ENCODE measurements at regions of chr3 and their contacts with region 1.

Region 1: DNA sequence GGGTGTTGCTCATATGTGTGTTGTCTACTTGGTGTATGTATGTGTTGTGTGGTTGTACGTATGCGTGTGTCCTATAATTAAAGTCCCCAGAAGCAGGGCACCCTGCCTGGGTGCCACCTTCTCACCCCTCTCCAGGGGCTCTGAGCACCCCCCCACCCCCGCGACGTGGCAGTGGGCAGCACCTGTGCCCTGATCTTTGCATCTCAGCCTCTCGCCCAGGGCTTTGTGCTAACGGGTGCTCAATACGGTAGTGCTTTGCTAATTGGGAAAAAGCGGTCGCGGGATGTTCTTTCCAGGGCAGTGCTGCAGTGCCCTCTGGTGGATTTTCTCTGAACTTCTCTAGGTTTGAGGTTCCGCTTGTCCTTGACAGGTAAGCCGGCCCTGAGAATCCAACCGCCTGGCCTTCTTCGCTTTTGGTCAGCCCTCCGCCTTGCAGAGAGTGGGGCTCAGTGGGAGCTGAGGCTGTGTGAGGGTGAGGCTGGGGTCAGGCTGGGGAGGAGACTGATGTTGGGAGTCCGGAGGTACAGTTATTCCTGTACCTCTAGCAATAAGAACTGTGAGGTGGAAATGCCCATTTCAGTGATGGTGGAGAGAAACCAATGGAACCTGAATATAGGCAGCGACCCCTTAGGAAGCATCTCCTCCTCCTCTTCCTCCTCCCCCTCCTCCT is 17.6 kb upstream of the EPHB3 start:
- DNase-seq: peak; percentile 85
- ATAC-seq: peak; percentile 80
- H3K4me3 Mint-ChIP-seq: no peak overlapping the region
- H3K27ac Mint-ChIP-seq: no peak overlapping the region
- H3K4me1 Mint-ChIP-seq: peaks cover 5% of the 10 kb centered on the region
- H3K27me3 Mint-ChIP-seq: peaks cover 24% of the 10 kb centered on the region

Region 2: DNA sequence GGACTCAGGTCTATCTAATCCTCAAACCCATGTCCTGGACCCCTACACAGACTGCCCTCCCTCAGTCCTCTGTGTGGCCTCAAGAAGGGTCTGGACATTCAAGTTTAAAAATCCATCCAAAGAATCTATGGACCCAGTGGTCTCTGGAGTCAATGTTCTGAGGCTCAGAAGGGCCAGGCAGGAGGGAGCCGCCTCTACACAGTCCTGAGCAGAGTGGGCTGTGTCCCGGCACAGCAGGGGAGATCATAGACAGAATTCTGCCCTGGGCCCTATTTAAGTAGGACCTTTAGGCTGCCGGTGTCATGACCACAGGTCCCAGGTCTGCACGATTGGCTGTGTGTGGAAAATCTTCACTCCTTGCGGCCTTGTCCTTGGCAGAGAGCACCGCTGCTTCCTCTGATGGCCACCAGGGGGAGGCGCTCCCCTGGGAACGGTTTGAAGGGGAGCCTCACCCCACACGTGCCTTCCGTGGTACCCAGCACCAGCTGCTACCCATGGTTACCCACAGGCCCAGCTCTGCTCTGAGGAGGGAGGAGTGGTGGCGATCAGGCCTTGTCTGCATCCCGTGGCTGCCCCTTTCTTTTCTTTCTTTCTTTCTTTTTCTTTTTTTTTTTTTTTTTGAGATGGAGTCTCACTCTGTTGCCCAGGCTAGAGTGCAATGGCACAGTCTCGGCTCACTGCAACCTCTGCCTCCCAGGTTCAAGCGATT is 126.2 kb before region 1 on chr3:
- CTCF ChIA-PET with region 1: interaction called, 17 read pairs
- POLR2A ChIA-PET with region 1: no interaction called
- DNase-seq: peak; percentile 75
- ATAC-seq: peak; percentile 97
- H3K4me3 Mint-ChIP-seq: no peak overlapping the region
- H3K27ac Mint-ChIP-seq: no peak overlapping the region
- H3K4me1 Mint-ChIP-seq: no peaks in the 10 kb centered on the region
- H3K27me3 Mint-ChIP-seq: peaks cover 1% of the 10 kb centered on the region

Region 3: GRCh38 chr3:184469423-184469822 is 74.6 kb before region 1 on chr3:
- CTCF ChIA-PET with region 1: interaction called, 10 read pairs
- POLR2A ChIA-PET with region 1: no interaction called
- DNase-seq: peak; percentile 33
- ATAC-seq: peak; percentile 48
- H3K4me3 Mint-ChIP-seq: no peak overlapping the region
- H3K27ac Mint-ChIP-seq: no peak overlapping the region
- H3K4me1 Mint-ChIP-seq: peaks cover 9% of the 10 kb centered on the region
- H3K27me3 Mint-ChIP-seq: peaks cover 22% of the 10 kb centered on the region

Region 4: DNA sequence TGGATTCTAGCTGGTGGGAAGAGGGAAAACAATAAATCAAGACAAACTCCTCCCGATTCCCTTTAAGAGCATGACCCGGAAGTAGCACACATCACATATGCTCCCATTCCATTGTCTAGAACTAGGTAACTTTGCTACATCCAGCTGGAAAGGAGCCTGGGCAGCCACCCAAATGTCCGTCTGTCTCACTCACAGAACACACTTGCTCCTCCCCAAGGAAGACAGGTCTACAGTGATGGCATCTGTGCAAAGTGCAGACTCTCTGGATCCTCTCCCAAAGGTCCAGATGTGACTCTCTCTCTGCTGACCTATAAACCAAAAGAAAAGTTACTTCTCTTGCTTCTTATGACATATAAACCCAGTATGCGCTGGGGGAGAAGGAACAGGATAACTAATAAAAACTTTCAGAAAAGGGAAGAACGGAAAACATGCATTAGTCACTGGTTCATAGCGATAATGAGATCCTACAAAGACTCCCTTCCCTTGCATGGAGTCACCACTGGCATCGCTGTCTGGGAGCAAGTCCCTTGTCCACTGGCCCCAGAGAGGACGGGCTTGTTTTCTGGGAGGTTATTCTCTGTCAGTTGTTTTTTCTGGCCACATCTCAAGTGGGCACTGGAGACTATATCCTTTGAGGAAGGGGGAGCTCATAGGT is 12.2 kb before region 1 on chr3:
- CTCF ChIA-PET with region 1: interaction called, 11 read pairs
- POLR2A ChIA-PET with region 1: no interaction called
- DNase-seq: no peak
- ATAC-seq: no peak
- H3K4me3 Mint-ChIP-seq: no peak overlapping the region
- H3K27ac Mint-ChIP-seq: no peak overlapping the region
- H3K4me1 Mint-ChIP-seq: no peaks in the 10 kb centered on the region
- H3K27me3 Mint-ChIP-seq: peaks cover 23% of the 10 kb centered on the region